MCF 10A (cell line): ENCODE measurements at regions of chr18 and their contacts with region 1.

Region 1: DNA sequence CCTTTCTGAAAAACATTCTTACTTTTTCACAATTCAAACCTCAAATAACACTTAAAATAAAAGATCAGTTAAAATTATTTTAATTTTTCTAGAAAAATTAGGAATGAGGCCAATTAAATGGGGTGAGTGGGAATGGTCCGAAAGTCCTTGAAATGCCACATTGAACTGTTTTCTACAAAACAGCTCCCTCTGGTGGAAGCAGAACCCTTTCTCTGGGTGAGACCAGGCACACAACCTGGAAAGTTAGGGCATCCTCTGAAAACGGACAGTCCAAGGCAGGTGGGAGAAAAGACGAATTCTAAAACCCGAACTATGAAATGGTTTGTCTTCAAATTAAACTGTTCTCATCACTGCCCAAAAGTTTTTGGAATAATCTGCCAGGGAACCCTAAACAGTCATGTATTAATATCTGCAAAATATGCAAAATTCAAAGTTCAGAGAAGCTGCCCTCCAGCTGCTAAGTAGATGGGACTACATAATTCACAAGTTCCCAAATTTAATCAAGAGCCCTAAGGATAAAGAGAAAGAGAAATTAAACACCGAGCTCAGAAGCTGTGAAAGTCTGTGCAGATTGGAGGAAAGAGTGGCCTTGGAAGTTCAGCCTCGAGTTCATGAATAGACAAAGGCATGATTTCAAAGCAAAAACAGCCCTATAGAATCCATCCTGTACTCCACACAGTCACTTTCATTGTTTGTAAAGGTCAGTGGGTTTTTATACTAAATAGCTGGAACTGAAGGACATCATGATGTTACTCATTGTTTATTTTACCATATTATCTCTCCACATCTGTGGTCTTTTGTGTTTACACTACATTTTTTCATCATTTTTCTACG is 108.3 kb downstream of the PIEZO2 start:
- DNase-seq: peak; percentile 52
- H3K4me3 Mint-ChIP-seq: no peak overlapping the region
- H3K27ac Mint-ChIP-seq: no peak overlapping the region
- H3K4me1 Mint-ChIP-seq: no peaks in the 10 kb centered on the region
- H3K27me3 Mint-ChIP-seq: no peaks in the 10 kb centered on the region
- CTCF ChIP-seq: peak; percentile 88

Region 2: DNA sequence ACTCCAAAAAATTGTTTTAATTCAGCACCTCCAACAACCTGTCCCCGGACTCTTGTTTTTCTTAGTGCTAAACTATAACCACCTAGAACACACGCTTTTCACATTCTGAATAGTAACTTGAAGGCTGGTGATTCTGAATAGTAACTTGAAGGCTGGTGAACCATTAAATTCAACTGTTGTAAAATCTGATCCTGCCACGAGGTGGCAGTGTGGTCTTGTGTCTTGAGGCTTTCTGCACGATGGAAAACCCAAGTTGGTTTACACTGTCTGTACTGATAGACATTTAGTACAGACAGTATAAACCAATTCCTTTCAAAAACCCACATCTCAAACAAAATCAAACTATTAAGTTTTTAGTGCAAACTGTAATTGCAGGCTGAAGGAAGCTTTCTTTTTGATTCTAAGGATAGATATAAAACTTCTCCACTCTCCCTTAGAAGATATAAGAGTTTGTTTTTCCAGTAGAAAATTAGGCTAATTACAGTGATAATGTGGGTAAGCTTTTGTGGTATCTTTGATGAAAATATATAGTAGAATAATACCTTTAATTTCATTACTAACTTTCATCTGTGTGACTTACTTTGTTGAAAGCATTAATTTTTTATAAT is 1069.6 kb before region 1 on chr18:
- CTCF ChIA-PET with region 1: interaction called, 4 read pairs
- POLR2A ChIA-PET with region 1: no interaction called
- intact Hi-C with region 1: loop called (anchors 2 kb)
- DNase-seq: peak; percentile 82
- H3K4me3 Mint-ChIP-seq: no peak overlapping the region
- H3K27ac Mint-ChIP-seq: no peak overlapping the region
- H3K4me1 Mint-ChIP-seq: no peaks in the 10 kb centered on the region
- H3K27me3 Mint-ChIP-seq: no peaks in the 10 kb centered on the region
- CTCF ChIP-seq: peak; percentile 65

Region 3: GRCh38 chr18:10787293-10787901 is 253.6 kb before region 1 on chr18:
- CTCF ChIA-PET with region 1: interaction called, 5 read pairs
- POLR2A ChIA-PET with region 1: no interaction called
- intact Hi-C with region 1: loop called (anchors 1 kb)
- DNase-seq: peak; percentile 86
- H3K4me3 Mint-ChIP-seq: no peak overlapping the region
- H3K27ac Mint-ChIP-seq: no peak overlapping the region
- H3K4me1 Mint-ChIP-seq: no peaks in the 10 kb centered on the region
- H3K27me3 Mint-ChIP-seq: peaks cover 19% of the 10 kb centered on the region
- CTCF ChIP-seq: peak; percentile 82

Region 4: DNA sequence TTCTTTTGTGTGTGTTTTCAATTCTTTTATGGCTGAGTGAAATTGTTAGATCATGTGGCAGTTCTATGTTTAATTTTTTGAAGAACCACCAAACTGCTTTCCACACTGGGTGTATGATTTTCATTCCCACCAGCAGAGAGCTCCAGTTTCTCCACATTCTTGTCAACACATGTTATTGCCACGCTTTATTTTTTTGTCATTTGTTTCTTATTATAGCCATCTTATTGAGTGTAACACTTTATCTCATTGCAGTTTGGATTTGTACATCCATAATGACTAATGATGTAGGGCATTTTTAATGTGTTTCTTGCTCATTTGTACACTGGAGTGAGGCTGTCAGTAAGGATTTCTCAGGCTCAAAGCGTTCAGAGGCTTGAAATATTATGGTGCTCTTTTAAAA is 75.9 kb before region 1 on chr18:
- CTCF ChIA-PET with region 1: no interaction called
- POLR2A ChIA-PET with region 1: no interaction called
- intact Hi-C with region 1: loop called (anchors 10 kb)
- DNase-seq: no peak
- H3K4me3 Mint-ChIP-seq: no peak overlapping the region
- H3K27ac Mint-ChIP-seq: peak overlapping the region; percentile 23
- H3K4me1 Mint-ChIP-seq: peaks cover 9% of the 10 kb centered on the region
- H3K27me3 Mint-ChIP-seq: no peaks in the 10 kb centered on the region
- CTCF ChIP-seq: no peak

Region 5: DNA sequence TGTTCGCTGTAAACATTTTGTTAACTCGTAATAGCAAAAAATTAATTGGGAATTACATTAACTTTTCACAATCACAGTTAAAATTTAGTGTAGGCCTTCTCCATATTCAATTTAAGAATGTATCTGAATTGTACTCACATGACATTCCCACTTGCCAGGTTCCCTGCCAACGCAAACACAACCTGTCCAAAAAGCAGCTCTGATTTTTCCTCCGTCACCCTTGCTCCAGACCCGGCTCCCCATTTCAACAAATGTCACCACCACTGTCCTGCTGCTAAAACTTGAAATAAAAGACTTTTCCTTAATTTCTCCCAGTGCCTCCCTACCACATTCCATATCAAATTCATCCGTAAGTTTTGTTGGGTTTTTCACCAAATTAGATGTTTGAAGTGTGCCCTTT is 12.0 kb before region 1 on chr18:
- CTCF ChIA-PET with region 1: interaction called, 17 read pairs
- POLR2A ChIA-PET with region 1: no interaction called
- intact Hi-C with region 1: no loop called
- DNase-seq: no peak
- H3K4me3 Mint-ChIP-seq: no peak overlapping the region
- H3K27ac Mint-ChIP-seq: no peak overlapping the region
- H3K4me1 Mint-ChIP-seq: no peaks in the 10 kb centered on the region
- H3K27me3 Mint-ChIP-seq: no peaks in the 10 kb centered on the region
- CTCF ChIP-seq: no peak

Region 6: DNA sequence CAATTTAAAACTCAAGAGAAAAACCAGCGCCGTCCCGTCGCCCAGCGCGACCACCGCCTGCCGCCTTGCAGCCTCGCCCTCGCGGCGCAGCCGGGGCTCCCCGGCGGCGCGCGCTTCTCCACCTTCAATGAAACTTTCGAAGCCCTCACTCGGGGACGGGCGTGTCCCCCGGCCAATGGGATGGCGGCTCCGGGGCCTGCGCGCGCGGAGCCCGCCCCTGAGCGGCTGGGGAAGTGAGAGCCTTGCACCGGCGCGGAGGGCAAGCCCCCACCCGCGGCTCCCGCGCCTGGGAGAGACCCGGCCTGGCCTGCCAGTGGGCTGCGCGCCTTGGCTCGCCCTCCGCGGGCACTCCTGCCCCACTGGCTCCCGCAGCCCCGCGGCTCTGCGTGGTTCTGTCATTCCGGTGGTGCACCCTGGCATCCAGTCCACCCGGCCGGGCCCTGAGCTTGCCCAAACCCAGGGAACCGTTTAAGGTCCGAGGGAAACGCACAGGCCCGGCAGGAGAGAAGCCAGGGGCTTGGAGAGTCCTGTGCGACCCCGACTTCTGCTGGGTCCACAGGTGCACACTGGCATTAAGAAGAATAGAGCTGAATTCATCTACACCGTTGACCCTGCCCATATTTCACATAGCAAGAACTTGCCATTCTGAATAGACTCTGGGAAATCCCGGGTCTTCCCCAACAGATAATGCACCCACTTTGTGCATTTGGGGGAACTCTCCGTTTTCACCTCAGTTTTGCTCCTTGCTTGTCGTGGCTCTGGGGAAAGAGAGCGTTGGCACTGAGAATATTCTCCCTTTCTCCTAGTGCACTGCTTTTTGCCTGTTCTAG is 108.6 kb after region 1 on chr18 and contains the start of gene PIEZO2:
- CTCF ChIA-PET with region 1: interaction called, 8 read pairs
- POLR2A ChIA-PET with region 1: interaction called, 3 read pairs
- intact Hi-C with region 1: loop called (anchors 1 kb)
- DNase-seq: no peak
- H3K4me3 Mint-ChIP-seq: no peak within 1 kb of the TSS
- H3K27ac Mint-ChIP-seq: no peak within 1 kb of the TSS
- H3K4me1 Mint-ChIP-seq: no peaks in the 10 kb centered on the region
- H3K27me3 Mint-ChIP-seq: peaks cover 54% of the 10 kb centered on the region
- CTCF ChIP-seq: no peak
- total RNA-seq, gene PIEZO2: 0.49 and 0.93 TPM in 2 replicates